ENCODE measurements at regions of chr3 and their contacts with region 1.

Region 1: GRCh38 chr3:128794770-128795649 is 69.0 kb downstream of the RAB7A start:
- DNase-seq: peak in 3 of 5 donors; percentile 59 to 61 (median 59)
- ATAC-seq: peak; percentile 78 to 94 (median 92)
- H3K4me3 ChIP-seq: no peak overlapping the region
- H3K27ac ChIP-seq: peak overlapping the region in 8 of 12 donors; percentile 44 to 71 (median 56)
- H3K4me1 ChIP-seq: peaks cover 0 to 69% (median 38%) of the 10 kb centered on the region in 12 donors
- H3K27me3 ChIP-seq: no peaks in the 10 kb centered on the region
- CTCF ChIP-seq: peak; percentile 71 to 88 (median 80)
- POLR2A ChIP-seq: no peak

Region 2: GRCh38 chr3:128497387-128498126 is 297.5 kb before region 1 on chr3:
- intact Hi-C with region 1: no loop called
- DNase-seq: peak; percentile 62 to 85 (median 72)
- ATAC-seq: peak; percentile 34 to 83 (median 74)
- H3K4me3 ChIP-seq: peak overlapping the region; percentile 25 to 66 (median 56)
- H3K27ac ChIP-seq: peak overlapping the region in 3 of 12 donors; percentile 0 to 51 (median 29)
- H3K4me1 ChIP-seq: peaks cover 8 to 29% (median 17%) of the 10 kb centered on the region in 12 donors
- H3K27me3 ChIP-seq: peaks cover 3 to 74% (median 28%) of the 10 kb centered on the region in 9 donors
- CTCF ChIP-seq: peak; percentile 44 to 93 (median 72)
- POLR2A ChIP-seq: no peak

Region 3: GRCh38 chr3:128680602-128681368 is 114.2 kb before region 1 on chr3:
- intact Hi-C with region 1: loop called (anchors 1 to 5 kb)
- DNase-seq: peak; percentile 99 to 100 (median 100)
- ATAC-seq: peak; percentile 100
- H3K4me3 ChIP-seq: peak overlapping the region; percentile 45 to 82 (median 70)
- H3K27ac ChIP-seq: peak overlapping the region; percentile 92 to 98 (median 96)
- H3K4me1 ChIP-seq: peaks cover 0 to 24% (median 7%) of the 10 kb centered on the region in 12 donors
- H3K27me3 ChIP-seq: no peaks in the 10 kb centered on the region
- CTCF ChIP-seq: peak; percentile 94 to 99 (median 96)
- POLR2A ChIP-seq: peak in 1 of 2 donors; percentile 68

Region 4: GRCh38 chr3:129003578-129004160 is 208.7 kb after region 1 on chr3:
- intact Hi-C with region 1: no loop called
- DNase-seq: peak in 1 of 5 donors; percentile 73
- ATAC-seq: peak in 2 of 4 donors; percentile 11 to 17
- H3K4me3 ChIP-seq: peak overlapping the region in 8 of 12 donors; percentile 24 to 84 (median 80)
- H3K27ac ChIP-seq: peak overlapping the region in 3 of 12 donors; percentile 86 to 93 (median 88)
- H3K4me1 ChIP-seq: peaks cover 3 to 75% (median 34%) of the 10 kb centered on the region in 12 donors
- H3K27me3 ChIP-seq: peaks cover 0 to 59% (median 14%) of the 10 kb centered on the region in 9 donors
- CTCF ChIP-seq: peak in 4 of 12 donors; percentile 7 to 33 (median 20)
- POLR2A ChIP-seq: no peak

Measured in heart left ventricle (tissue), 16 donors.